WTC11 (cell line): ENCODE measurements at regions of chr7 and their contacts with region 1.

Region 1: GRCh38 chr7:73606801-73607691 is 17.3 kb downstream of the MLXIPL start:
- DNase-seq: peak; percentile 93
- ATAC-seq: peak; percentile 86
- H3K4me3 Mint-ChIP-seq: peak overlapping the region; percentile 71
- H3K27ac Mint-ChIP-seq: peak overlapping the region; percentile 57; the same call in 1 of the 2 replicates
- H3K4me1 Mint-ChIP-seq: peaks cover 3% of the 10 kb centered on the region
- H3K27me3 Mint-ChIP-seq: peaks cover 4% of the 10 kb centered on the region
- CTCF ChIP-seq: peak; percentile 97

Region 2: DNA sequence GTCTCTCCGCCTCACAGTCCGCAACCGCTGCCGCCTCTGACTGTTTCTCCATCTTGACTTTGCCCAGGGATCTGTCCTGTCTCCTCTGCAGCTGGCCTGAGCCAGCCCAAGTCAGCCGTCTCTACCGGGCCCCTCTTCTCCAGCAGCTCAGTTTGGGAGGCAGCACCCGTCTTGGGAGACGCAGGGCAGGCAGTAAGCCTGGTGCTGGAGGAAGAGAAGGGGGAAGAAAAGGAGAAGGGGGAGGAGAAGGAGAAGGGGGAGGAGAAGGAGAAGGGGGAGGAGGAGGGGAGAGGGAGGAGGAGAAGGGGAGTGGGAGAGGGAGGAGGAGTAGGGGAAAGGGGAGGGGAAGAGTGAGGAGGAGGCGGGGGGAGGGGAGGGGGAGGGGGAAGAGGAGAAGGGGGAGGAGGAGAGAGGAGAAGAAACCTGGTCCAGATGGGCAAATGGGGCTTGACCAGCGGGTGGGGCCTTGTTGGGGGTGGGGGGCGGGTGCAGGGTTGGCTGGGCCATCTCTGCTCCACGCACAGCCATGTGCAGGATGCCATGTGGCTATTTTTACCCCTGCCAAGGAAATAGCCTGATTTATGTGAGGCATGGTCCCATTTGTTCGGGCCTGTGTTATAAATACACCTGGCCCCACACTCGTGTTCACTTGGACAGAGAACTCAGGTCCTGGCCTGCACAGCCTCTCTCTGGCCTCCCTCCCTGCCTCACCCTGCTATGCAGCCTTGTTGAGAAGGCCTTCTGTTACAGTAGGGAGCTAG is 209.3 kb before region 1 on chr7:
- CTCF ChIA-PET with region 1: no interaction called
- POLR2A ChIA-PET with region 1: no interaction called
- DNase-seq: peak; percentile 38
- ATAC-seq: peak; percentile 79
- H3K4me3 Mint-ChIP-seq: peak overlapping the region; percentile 73
- H3K27ac Mint-ChIP-seq: peak overlapping the region; percentile 51
- H3K4me1 Mint-ChIP-seq: peaks cover 19% of the 10 kb centered on the region
- H3K27me3 Mint-ChIP-seq: peaks cover 4% of the 10 kb centered on the region
- CTCF ChIP-seq: no peak

Region 3: DNA sequence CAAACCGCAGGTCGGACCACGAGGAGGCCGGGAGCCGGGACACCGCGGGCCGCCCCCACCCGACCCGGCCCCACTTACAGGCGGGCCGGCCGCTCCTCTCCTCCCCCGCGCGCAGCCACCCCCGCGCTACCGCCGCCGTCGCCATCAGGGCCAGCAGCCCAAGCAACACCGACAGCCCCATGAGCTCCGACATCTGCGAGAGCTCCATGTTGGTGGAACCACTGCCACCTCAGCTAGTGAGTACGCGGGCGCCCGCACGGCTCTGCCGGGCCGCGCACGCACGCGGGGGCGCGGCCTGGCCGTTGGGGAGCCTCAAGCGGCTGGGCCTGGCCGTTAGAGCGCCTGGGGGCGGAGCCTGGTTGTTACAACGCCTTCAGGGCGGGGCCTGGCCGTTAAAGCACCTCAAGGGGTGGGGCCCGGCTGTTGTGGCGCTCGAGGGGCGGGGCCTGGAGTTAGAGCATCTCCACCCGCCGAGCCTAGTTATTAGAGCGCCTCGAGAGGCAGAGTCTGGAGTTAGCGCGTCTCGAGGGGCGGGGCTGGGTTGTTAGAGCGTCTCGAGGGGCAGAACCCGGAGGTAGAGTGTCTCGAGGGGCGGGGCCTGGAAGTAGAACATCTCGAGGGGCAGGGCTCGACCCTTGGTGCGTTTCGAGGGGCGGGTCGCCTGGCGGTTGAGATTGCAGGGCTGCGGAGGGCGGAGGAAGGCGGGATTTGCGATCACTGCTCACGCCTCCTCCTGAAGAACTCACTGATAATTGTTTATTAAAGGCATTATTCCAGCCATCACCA is 28.5 kb before region 1 on chr7 and contains the start of gene TBL2:
- CTCF ChIA-PET with region 1: interaction called, 30 read pairs
- POLR2A ChIA-PET with region 1: no interaction called
- DNase-seq: peak; percentile 99
- ATAC-seq: peak; percentile 93
- H3K4me3 Mint-ChIP-seq: peak within 1 kb of the TSS; percentile 86
- H3K27ac Mint-ChIP-seq: peak within 1 kb of the TSS; percentile 94
- H3K4me1 Mint-ChIP-seq: peaks cover 16% of the 10 kb centered on the region
- H3K27me3 Mint-ChIP-seq: peaks cover 45% of the 10 kb centered on the region
- CTCF ChIP-seq: no peak
- total RNA-seq, gene TBL2: 28.6 to 32.3 TPM (median 29.0 TPM) in 3 replicates

Region 4: GRCh38 chr7:73635428-73636200 is 28.6 kb after region 1 on chr7:
- CTCF ChIA-PET with region 1: interaction called, 11 read pairs
- POLR2A ChIA-PET with region 1: no interaction called
- DNase-seq: no peak
- ATAC-seq: no peak
- H3K4me3 Mint-ChIP-seq: no peak overlapping the region
- H3K27ac Mint-ChIP-seq: no peak overlapping the region
- H3K4me1 Mint-ChIP-seq: peaks cover 7% of the 10 kb centered on the region
- H3K27me3 Mint-ChIP-seq: no peaks in the 10 kb centered on the region
- CTCF ChIP-seq: no peak

Region 5: GRCh38 chr7:73667344-73668102 is 60.5 kb after region 1 on chr7 and contains the start of gene VPS37D:
- CTCF ChIA-PET with region 1: interaction called, 93 read pairs
- POLR2A ChIA-PET with region 1: no interaction called
- DNase-seq: peak; percentile 96
- ATAC-seq: peak; percentile 87
- H3K4me3 Mint-ChIP-seq: peak within 1 kb of the TSS; percentile 75
- H3K27ac Mint-ChIP-seq: no peak within 1 kb of the TSS; the same call in 1 of the 2 replicates
- H3K4me1 Mint-ChIP-seq: peaks cover 40% of the 10 kb centered on the region
- H3K27me3 Mint-ChIP-seq: peaks cover 30% of the 10 kb centered on the region
- CTCF ChIP-seq: peak; percentile 86
- total RNA-seq, gene VPS37D: 5.7 to 7.5 TPM (median 5.8 TPM) in 3 replicates

Region 6: DNA sequence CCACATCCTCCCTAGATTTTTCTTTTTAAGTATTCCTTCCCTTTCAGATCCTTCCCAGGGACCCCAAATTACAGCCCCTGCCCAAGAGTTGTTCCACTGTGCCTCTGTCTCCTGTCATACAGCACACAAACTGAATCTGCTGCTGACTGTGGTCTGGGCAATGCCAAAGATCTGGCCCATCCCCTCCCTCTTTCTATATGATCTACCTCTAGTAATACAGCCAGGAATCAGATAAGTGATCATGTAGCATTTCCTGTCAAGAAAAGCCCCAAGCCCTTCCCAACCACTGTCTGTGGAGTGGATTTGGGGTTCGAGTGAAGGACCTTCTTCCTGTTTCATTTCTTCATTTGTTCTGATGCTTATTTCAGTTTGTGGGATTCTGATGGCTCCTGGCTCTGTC is 105.7 kb after region 1 on chr7:
- CTCF ChIA-PET with region 1: interaction called, 19 read pairs
- POLR2A ChIA-PET with region 1: interaction called, 3 read pairs
- DNase-seq: no peak
- ATAC-seq: no peak
- H3K4me3 Mint-ChIP-seq: no peak overlapping the region
- H3K27ac Mint-ChIP-seq: no peak overlapping the region
- H3K4me1 Mint-ChIP-seq: no peaks in the 10 kb centered on the region
- H3K27me3 Mint-ChIP-seq: peaks cover 2% of the 10 kb centered on the region
- CTCF ChIP-seq: no peak

Region 7: DNA sequence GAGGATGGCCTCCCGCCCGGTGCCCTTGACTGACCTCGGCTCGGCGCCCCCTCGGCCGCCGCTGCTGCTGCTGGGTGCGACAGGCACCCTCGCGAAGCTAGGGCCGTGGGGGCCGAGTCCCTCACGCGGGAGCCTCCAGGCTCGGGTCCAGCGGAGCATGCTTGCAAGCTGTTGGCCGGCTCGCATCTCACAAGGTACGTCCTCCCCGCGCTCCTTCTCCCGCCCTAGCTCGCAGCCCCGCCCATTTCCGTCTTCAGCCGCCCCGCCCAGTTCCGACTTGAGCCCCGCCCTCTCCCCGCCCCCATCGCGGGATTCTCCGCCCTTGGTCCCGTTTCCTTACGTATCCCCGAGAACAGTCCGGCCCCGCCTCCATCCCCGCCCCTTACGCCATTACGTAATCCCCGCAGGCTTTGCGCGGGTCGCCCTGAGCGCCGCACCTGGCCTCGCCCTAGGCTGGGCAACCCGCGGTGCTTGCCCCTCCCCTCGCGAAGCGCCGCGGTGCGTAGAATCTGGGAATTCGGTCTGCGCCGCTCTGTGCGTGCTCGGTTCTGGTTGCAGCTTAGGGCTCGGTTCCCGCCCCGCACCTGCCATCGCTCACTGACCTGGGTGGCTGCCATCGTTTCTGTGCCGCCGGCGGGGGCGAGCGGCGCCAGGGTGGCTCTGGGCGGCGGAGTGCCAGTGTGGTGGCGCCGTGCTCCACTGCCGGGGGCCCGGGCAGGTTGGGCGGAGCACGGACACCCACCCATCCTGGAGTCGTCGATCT is 131.7 kb after region 1 on chr7 and contains the start of gene ABHD11:
- CTCF ChIA-PET with region 1: interaction called, 35 read pairs
- POLR2A ChIA-PET with region 1: interaction called, 3 read pairs
- DNase-seq: peak; percentile 98
- ATAC-seq: peak; percentile 61
- H3K4me3 Mint-ChIP-seq: peak within 1 kb of the TSS; percentile 93
- H3K27ac Mint-ChIP-seq: peak within 1 kb of the TSS; percentile 98
- H3K4me1 Mint-ChIP-seq: peaks cover 37% of the 10 kb centered on the region
- H3K27me3 Mint-ChIP-seq: peaks cover 27% of the 10 kb centered on the region
- CTCF ChIP-seq: no peak
- total RNA-seq, gene ABHD11: 23.8 to 27.6 TPM (median 26.5 TPM) in 3 replicates